PC-9 (cell line): ENCODE measurements at regions of chr2 and their contacts with region 1.

Region 1: DNA sequence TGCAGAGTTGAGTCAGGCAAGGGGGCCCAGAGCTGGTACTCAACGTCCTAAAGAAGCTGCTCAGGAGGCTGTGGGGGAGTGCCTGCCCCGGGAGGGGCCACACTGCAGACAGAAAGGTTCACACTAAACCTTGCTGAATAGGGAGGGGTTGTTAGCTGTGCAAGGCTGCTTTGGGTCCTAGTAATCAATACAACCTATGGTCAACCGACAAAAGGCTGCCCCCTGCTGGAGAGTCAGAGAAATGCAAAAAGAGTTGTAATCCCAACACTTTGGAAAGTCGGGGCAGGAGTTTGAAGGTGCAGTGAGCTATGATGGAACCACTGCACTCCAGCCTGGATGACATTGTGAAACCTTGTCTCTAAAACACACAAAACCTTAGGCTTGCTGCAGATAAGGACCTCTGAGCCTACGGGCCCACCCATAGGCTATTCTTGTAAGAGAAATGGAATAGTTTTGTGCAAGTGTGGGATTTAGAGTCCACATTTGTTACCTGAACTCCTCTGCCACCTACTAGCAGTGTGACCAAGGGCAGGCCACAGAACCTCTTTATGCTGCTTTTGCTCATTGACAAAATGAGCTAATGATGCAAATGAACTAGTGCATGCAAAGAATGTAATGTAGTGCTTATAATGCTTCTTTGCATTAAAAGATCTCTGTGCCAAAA is 81.5 kb downstream of the PRPF40A start:
- DNase-seq: peak in 1 of 2 experiments; percentile 46
- H3K4me3 ChIP-seq: no peak overlapping the region
- H3K27ac ChIP-seq: no peak overlapping the region
- H3K4me1 ChIP-seq: no peaks in the 10 kb centered on the region
- H3K27me3 ChIP-seq: no peaks in the 10 kb centered on the region
- CTCF ChIP-seq: peak; percentile 93

Region 2: GRCh38 chr2:151576062-151576461 is 1059.7 kb before region 1 on chr2:
- CTCF ChIA-PET with region 1: no interaction called
- POLR2A ChIA-PET with region 1: no interaction called
- intact Hi-C with region 1: no loop called
- DNase-seq: no peak
- H3K4me3 ChIP-seq: no peak overlapping the region
- H3K27ac ChIP-seq: no peak overlapping the region
- H3K4me1 ChIP-seq: no peaks in the 10 kb centered on the region
- H3K27me3 ChIP-seq: no peaks in the 10 kb centered on the region
- CTCF ChIP-seq: no peak

Region 3: GRCh38 chr2:152042636-152043615 is 592.8 kb before region 1 on chr2:
- CTCF ChIA-PET with region 1: no interaction called
- POLR2A ChIA-PET with region 1: no interaction called
- intact Hi-C with region 1: loop called (anchors 5 kb)
- DNase-seq: no peak
- H3K4me3 ChIP-seq: no peak overlapping the region
- H3K27ac ChIP-seq: no peak overlapping the region
- H3K4me1 ChIP-seq: no peaks in the 10 kb centered on the region
- H3K27me3 ChIP-seq: no peaks in the 10 kb centered on the region
- CTCF ChIP-seq: no peak

Region 4: DNA sequence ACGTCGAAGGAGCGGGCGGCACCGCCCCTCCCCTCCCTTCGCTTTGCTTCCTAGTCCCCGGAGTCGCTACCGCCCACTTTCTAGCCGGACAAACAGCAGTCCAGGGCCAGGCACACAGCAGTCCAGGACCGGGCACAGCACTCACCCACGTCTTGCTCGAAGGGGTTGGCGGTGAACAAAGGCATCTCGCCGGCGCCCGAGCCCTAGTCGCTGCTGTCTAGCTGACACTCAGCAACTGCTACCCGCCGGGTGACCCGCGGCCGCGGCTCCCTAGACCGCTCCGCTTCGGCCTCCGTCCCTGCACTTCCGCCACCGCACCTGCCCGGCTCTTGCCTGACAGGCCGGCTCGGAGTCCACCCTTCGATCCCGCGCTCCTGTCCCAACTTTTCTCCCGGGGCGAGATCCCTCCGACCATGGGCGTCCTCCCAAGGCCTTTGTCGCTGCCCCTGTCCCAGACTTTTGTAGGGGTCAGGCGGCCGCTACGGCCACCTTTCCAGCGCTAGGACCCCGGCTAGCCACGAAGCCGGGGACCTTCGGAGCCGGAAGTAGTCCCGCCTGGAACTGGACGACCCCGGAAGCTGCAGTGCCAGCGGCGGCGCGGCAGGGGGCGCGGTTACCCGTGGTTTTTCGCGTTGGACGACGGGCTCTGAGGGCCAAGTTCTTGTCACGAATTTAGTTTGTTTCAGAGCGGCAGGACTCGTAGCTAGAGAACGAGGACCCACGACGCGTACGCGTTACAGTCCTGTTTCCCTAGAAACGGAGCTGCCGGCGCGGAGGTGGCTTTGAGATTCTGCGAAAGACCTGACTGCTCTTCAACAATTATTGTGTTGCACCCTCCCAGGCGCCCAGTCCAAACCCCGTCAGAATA is 460.1 kb before region 1 on chr2 and contains the start of gene STAM2:
- CTCF ChIA-PET with region 1: interaction called, 5 read pairs
- POLR2A ChIA-PET with region 1: interaction called, 4 read pairs
- intact Hi-C with region 1: loop called (anchors 1 kb)
- DNase-seq: peak; percentile 80 to 94
- H3K4me3 ChIP-seq: peak within 1 kb of the TSS; percentile 83
- H3K27ac ChIP-seq: peak within 1 kb of the TSS; percentile 84
- H3K4me1 ChIP-seq: peaks cover 22% of the 10 kb centered on the region
- H3K27me3 ChIP-seq: no peaks in the 10 kb centered on the region
- CTCF ChIP-seq: peak; percentile 95
- total RNA-seq, gene STAM2: 14.6 and 16.0 TPM in 2 replicates

Region 5: GRCh38 chr2:152189622-152190495 is 445.9 kb before region 1 on chr2:
- CTCF ChIA-PET with region 1: no interaction called
- POLR2A ChIA-PET with region 1: no interaction called
- intact Hi-C with region 1: loop called (anchors 1 kb)
- DNase-seq: peak; percentile 39 to 53
- H3K4me3 ChIP-seq: no peak overlapping the region
- H3K27ac ChIP-seq: no peak overlapping the region
- H3K4me1 ChIP-seq: no peaks in the 10 kb centered on the region
- H3K27me3 ChIP-seq: no peaks in the 10 kb centered on the region
- CTCF ChIP-seq: peak; percentile 85